Activated T-helper 2 cell treated with anti-CD3 and anti-CD28 coated beads, Interferon-gamma antibody, Interleukin-2, Interleukin-4, amounts not matched to agents 10 μg/mL and 5 μg/mL and 100 μg/mL, durations not matched to agents 14 hours and 24 hours and 36 hours (primary cell): ENCODE measurements at regions of chr17 and their contacts with region 1.

Region 1: GRCh38 chr17:55735731-55736405 is 13.2 kb upstream of the TMEM100 start:
- DNase-seq: peak; percentile 13
- H3K4me3 Mint-ChIP-seq: no peak overlapping the region
- H3K27ac Mint-ChIP-seq: no peak overlapping the region
- H3K4me1 Mint-ChIP-seq: peaks cover 35% of the 10 kb centered on the region
- H3K27me3 Mint-ChIP-seq: peaks cover 37% of the 10 kb centered on the region

Region 2: GRCh38 chr17:55576996-55577586 is 158.8 kb before region 1 on chr17:
- intact Hi-C with region 1: loop called (anchors 5 kb)
- DNase-seq: peak; percentile 23
- H3K4me3 Mint-ChIP-seq: no peak overlapping the region
- H3K27ac Mint-ChIP-seq: no peak overlapping the region
- H3K4me1 Mint-ChIP-seq: no peaks in the 10 kb centered on the region
- H3K27me3 Mint-ChIP-seq: peaks cover 29% of the 10 kb centered on the region

Region 3: DNA sequence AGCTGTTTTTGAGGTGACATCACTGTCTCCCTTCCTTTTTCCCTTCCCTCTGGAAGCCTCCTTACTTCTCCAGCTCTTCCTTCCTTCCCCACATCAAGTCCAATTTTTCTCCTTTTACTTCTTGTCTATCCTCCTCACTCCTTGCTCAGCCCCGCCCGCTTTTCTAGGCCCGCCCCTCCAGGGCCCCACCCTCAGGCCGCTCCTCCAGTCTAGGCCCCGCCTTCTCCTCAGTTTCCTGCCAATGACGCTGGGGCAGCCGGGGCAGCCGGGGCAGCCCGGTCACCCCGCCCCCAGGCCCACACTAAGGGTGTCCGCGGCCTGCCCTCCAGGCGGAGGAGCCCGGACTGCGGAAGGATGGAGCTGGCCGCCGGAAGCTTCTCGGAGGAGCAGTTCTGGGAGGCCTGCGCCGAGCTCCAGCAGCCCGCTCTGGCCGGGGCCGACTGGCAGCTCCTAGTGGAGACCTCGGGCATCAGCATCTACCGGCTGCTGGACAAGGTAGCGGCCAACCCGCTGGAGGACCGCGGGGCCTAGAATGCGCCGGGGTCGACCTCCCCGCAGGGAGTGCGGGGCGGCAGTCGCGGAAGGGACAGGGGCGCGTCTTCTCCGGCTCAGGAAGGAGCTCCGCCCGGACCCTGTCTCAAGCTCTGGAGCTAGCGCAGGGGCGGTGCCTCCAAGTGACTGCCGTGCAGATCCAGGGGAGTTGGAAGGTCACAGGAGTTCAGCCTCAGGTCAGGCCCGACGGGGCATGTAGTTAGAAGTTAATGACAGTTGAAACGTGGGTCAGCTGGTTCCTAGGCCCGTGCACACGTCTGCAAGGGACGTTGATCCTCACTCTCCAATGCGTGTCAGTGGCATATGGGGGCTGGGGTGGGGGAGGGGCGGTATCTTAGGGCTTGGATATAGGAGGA is 15.1 kb after region 1 on chr17 and contains the start of gene PCTP:
- intact Hi-C with region 1: loop called (anchors 2 kb)
- DNase-seq: peak; percentile 85
- H3K4me3 Mint-ChIP-seq: peak within 1 kb of the TSS; percentile 81
- H3K27ac Mint-ChIP-seq: peak within 1 kb of the TSS; percentile 28
- H3K4me1 Mint-ChIP-seq: peaks cover 14% of the 10 kb centered on the region
- H3K27me3 Mint-ChIP-seq: peaks cover 30% of the 10 kb centered on the region
- total RNA-seq, gene PCTP: 8.8 and 9.4 TPM in 2 replicates

Region 4: DNA sequence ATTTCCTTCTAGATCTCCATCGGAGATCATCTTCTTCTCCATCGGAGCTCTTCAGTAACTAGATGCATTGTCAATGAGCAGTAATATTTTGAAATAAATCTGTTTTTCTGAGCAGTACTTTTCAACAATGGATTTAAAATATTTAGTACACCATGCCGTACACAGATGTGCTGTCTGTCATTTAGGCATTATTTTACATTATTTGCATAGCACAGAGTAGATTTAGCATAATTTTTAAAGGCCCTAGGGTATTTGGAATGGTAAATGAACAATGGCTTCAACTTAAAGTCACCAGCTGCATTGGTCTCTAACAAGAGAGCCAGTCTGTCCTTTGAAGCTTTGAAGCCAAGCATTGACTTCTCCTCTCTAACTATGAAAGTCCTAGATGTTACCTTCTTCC is 322.0 kb after region 1 on chr17:
- intact Hi-C with region 1: no loop called
- DNase-seq: no peak
- H3K4me3 Mint-ChIP-seq: no peak overlapping the region
- H3K27ac Mint-ChIP-seq: no peak overlapping the region
- H3K4me1 Mint-ChIP-seq: no peaks in the 10 kb centered on the region
- H3K27me3 Mint-ChIP-seq: no peaks in the 10 kb centered on the region